Heart right ventricle (tissue), 16 donors: ENCODE measurements at regions of chr3 and their contacts with region 1.

Region 1: GRCh38 chr3:30199096-30199759 is 407.2 kb upstream of the TGFBR2 start:
- DNase-seq: peak; percentile 77 to 81
- ATAC-seq: peak in 6 of 8 donors; percentile 54 to 85 (median 77)
- H3K4me3 ChIP-seq: no peak overlapping the region
- H3K27ac ChIP-seq: peak overlapping the region in 3 of 10 donors; percentile 8 to 37 (median 19)
- H3K4me1 ChIP-seq: peaks cover 2 to 35% (median 22%) of the 10 kb centered on the region in 9 donors
- H3K27me3 ChIP-seq: no peaks in the 10 kb centered on the region
- CTCF ChIP-seq: peak; percentile 75 to 96 (median 86)

Region 2: GRCh38 chr3:28590216-28590615 is 1609.0 kb before region 1 on chr3:
- intact Hi-C with region 1: no loop called
- DNase-seq: no peak
- ATAC-seq: no peak
- H3K4me3 ChIP-seq: no peak overlapping the region
- H3K27ac ChIP-seq: no peak overlapping the region
- H3K4me1 ChIP-seq: no peaks in the 10 kb centered on the region
- H3K27me3 ChIP-seq: no peaks in the 10 kb centered on the region
- CTCF ChIP-seq: no peak

Region 3: DNA sequence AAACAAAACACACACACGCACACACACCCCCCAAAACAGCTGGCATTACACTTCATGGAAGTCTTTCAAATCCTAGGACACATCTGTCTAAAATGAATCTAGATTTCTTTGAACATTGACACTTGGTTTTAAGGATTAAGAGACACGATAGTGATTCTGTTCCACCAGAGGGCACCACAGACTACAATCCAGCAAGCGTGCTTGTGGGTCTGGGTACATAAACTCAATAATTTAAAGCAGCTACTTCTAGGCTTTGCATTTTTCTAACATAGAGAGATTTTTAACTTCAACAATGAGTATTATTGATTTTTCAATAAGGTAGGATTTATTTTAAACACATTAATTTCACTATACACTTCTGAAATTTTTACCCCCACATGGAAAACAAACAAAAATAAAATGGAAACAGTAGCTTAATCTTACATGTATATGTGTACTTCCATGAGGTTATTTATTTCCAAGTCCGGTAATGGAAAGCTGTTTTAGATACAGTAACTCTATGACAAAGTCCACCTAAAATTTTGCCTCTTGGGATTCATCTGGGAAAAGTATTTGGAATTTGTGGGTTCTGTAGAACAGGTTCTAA is 156.9 kb before region 1 on chr3:
- intact Hi-C with region 1: loop called in 9 of 10 experiments (anchors 2 to 5 kb)
- DNase-seq: peak in 1 of 2 donors; percentile 72
- ATAC-seq: peak in 6 of 8 donors; percentile 43 to 78 (median 64)
- H3K4me3 ChIP-seq: no peak overlapping the region
- H3K27ac ChIP-seq: no peak overlapping the region
- H3K4me1 ChIP-seq: peaks cover 0 to 21% (median 4%) of the 10 kb centered on the region in 9 donors
- H3K27me3 ChIP-seq: no peaks in the 10 kb centered on the region
- CTCF ChIP-seq: peak; percentile 54 to 85 (median 79)

Region 4: DNA sequence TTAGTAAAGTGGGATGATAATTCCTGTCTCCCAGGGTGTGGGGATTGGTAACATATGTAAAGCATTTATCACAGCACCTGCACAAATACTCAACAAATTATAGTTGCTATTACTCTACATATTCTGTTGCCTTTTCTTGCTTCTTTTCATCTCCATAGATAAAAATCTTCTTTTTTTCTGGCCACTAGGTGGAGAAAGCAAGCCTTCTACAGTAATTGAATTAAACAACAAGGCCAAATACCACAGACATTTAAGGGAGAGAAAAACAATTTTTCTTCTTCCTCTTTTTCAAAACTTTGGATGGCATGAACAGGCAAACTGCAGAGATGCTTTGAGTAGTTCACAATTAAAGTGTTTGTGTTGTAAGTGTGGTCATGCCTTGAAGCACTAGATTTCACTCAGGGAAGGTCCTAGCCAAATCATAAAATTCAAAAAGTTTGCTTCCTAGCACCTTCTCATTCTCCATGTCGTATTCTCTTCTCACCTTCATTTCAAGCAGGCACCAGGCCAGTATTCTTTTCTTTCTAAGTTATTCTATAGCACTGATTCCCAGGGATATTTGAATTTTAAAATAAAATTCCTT is 86.2 kb before region 1 on chr3:
- intact Hi-C with region 1: loop called in 9 of 10 experiments (anchors 1 to 5 kb)
- DNase-seq: no peak
- ATAC-seq: peak in 5 of 8 donors; percentile 12 to 55 (median 44)
- H3K4me3 ChIP-seq: no peak overlapping the region
- H3K27ac ChIP-seq: no peak overlapping the region
- H3K4me1 ChIP-seq: peaks cover 0 to 20% (median 8%) of the 10 kb centered on the region in 9 donors
- H3K27me3 ChIP-seq: no peaks in the 10 kb centered on the region
- CTCF ChIP-seq: peak; percentile 42 to 81 (median 71)

Region 5: GRCh38 chr3:30124435-30125395 is 74.5 kb before region 1 on chr3:
- intact Hi-C with region 1: loop called in 3 of 10 experiments (anchors 5 kb)
- DNase-seq: peak in 1 of 2 donors; percentile 51
- ATAC-seq: peak in 5 of 8 donors; percentile 67 to 79 (median 78)
- H3K4me3 ChIP-seq: no peak overlapping the region
- H3K27ac ChIP-seq: no peak overlapping the region
- H3K4me1 ChIP-seq: peaks cover 0 to 10% (median 0%) of the 10 kb centered on the region in 9 donors
- H3K27me3 ChIP-seq: no peaks in the 10 kb centered on the region
- CTCF ChIP-seq: no peak

Region 6: GRCh38 chr3:30135190-30135589 is 64.0 kb before region 1 on chr3:
- intact Hi-C with region 1: loop called in 2 of 10 experiments (anchors 5 to 10 kb)
- DNase-seq: peak; percentile 10 to 13
- ATAC-seq: peak in 3 of 8 donors; percentile 52 to 65 (median 62)
- H3K4me3 ChIP-seq: no peak overlapping the region
- H3K27ac ChIP-seq: no peak overlapping the region
- H3K4me1 ChIP-seq: peaks cover 0 to 6% (median 0%) of the 10 kb centered on the region in 9 donors
- H3K27me3 ChIP-seq: no peaks in the 10 kb centered on the region
- CTCF ChIP-seq: peak in 7 of 9 donors; percentile 20 to 69 (median 52)

Region 7: GRCh38 chr3:30751610-30752299 is 552.5 kb after region 1 on chr3:
- intact Hi-C with region 1: loop called in 3 of 10 experiments (anchors 5 to 10 kb)
- DNase-seq: peak; percentile 26 to 38
- ATAC-seq: peak in 5 of 8 donors; percentile 38 to 61 (median 50)
- H3K4me3 ChIP-seq: no peak overlapping the region
- H3K27ac ChIP-seq: no peak overlapping the region
- H3K4me1 ChIP-seq: peaks cover 0 to 28% (median 0%) of the 10 kb centered on the region in 9 donors
- H3K27me3 ChIP-seq: no peaks in the 10 kb centered on the region
- CTCF ChIP-seq: peak in 7 of 9 donors; percentile 13 to 64 (median 54)